Cardiac septum (tissue), 1 donor: ENCODE measurements at regions of chr10 and their contacts with region 1.

Region 1: DNA sequence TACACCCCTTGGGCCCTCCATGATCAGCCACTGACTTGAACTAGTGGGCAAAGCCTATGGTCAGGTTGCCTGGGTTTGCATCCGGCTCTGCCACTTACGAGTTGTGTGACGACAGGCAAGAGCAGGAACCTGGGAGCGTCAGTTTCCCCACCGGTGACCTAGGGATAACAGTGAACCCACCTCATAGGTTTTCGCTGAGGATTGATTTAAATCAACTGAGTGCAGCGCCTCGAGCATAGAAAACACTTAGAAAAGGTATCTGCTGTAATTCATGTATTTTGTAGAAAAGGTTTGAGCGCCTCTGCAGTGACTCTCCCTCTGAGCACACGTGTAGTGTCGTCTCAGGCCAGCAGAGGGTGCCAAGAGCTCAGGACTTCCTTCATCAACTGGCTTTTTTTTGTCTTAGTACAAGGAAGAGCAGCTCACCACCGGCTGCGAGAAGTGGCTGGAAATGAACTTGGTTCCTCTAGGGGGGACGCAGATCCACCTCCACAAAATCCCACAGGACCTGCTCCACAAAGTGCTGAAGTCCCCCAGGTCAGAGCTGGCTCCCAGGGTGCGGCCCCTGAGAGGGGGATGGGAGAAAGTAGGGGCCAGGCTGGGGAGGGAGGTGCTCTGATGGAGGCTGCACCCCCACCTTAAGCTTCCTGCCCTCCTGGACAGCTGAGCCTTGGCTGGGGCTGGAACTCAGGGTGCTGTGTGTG is 27.7 kb downstream of the BTBD16 start:
- DNase-seq: no peak

Region 2: DNA sequence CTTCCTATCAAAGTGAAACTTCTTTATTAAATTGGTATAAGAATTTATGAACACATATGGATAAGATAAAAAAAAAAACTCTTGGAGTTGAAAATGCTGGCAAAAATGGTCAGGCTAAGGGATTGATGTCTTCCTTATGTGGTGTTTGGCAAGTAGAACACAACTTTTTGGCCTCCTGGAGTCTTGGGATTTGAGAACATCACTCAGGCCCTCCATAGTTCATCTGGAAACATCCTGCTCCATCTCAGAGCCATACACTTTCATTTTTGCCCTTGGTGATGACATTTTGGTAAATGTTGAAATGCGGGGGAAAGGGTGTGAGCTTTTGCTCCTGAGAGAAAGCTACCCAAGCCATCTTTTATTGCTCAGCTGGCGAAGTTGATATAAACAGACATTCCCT is 55.2 kb before region 1 on chr10:
- intact Hi-C with region 1: no loop called
- DNase-seq: no peak

Region 3: DNA sequence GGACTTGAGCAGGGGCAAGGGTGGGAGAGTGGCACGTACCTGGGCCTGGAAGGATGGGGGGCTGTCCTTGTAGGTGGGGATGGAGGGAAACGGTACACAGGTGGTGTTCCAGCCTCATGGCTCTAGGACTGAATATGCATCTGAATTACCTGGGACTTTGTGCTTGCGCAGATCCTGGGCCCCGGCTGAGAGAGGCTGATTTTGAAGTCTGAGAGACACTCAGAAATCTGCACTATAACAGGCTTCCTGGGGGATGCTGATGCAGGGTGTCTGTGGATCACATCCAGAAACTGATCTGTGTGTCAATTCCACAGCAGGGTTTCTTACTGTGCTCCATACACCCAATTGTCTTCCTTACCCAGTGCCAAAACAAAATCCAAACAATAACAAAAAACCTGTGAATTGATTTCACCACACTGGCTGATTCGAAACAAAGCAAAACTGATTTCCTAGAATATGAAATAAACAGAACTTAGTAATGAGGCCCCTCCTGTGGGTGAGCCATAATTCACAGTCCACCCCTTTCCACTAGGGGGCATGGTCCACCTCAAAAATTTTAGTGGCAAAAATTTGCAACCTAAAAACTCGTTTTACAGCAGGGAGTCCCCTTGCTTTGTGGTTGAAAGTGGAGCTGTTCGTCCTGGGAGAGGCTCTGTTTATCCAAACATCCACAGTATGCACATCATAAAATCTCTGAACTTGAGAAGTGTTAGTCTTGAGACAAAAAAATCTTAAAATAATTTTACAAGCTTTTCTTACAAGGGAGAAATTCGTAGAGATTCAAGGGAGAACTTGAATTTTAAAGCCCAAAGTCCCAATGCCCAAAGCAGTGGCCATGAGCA is 43.8 kb after region 1 on chr10:
- intact Hi-C with region 1: loop called (anchors 2 kb)
- DNase-seq: no peak

Region 4: GRCh38 chr10:122435212-122435827 is 136.6 kb after region 1 on chr10:
- intact Hi-C with region 1: loop called (anchors 1 kb)
- DNase-seq: no peak

Region 5: GRCh38 chr10:122703439-122704118 is 404.8 kb after region 1 on chr10:
- intact Hi-C with region 1: loop called (anchors 5 kb)
- DNase-seq: no peak